Activated CD4-positive, alpha-beta T cell treated with anti-CD3 and anti-CD28 coated beads, Interleukin-2, amount 10 ng/mL, durations not matched to agents 7 days and 5 days (primary cell): ENCODE measurements at regions of chr6 and their contacts with region 1.

Region 1: DNA sequence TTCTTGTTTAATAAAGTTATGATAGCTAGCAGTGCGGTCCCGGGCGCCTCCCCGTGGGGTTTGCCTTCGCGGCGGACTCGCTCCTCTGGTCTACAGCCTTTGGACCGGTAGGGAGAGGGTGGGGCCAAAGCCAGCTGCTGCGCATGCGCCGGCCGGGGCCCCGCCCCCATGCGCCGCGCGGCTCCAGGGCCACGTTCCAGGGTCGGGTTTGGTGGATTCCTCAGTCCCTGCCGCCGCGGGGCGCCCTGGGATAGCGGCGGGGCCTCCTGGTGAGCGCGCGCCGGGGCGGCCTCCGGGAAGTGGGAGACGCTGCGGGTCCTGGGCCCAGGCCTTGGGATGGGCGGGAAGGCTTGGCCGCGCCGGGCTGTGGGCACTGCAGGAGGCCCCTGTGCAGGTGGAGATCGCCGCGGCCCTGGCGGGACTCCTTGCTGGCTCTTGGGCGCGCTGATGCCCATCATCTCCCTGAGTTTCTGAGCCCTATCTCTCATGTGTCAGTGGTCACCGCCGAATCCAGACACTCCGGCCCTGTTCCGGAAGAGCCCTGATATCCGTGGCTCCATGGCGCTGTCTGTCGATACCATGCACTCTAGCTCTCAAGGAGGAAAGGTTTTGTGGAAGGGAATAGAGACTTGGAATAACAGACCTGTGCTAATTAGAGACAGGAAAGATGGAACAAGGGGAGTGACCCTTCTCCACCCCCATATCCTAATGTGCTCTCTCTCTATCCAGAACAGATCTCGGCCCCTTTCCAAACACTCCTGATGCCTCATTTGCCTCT is at the start of gene VARS2:
- DNase-seq: peak; percentile 83
- H3K4me3 Mint-ChIP-seq: peak within 1 kb of the TSS; percentile 83
- H3K27ac Mint-ChIP-seq: peak within 1 kb of the TSS; percentile 90
- H3K4me1 Mint-ChIP-seq: peaks cover 35% of the 10 kb centered on the region
- H3K27me3 Mint-ChIP-seq: no peaks in the 10 kb centered on the region
- total RNA-seq, gene VARS2: 34.3 to 40.2 TPM

Region 2: GRCh38 chr6:29995340-29995777 is 918.9 kb before region 1 on chr6:
- CTCF ChIA-PET with region 1: no interaction called
- POLR2A ChIA-PET with region 1: no interaction called
- DNase-seq: no peak
- H3K4me3 Mint-ChIP-seq: no peak overlapping the region
- H3K27ac Mint-ChIP-seq: no peak overlapping the region
- H3K4me1 Mint-ChIP-seq: peaks cover 3% of the 10 kb centered on the region
- H3K27me3 Mint-ChIP-seq: peaks cover 21% of the 10 kb centered on the region

Region 3: DNA sequence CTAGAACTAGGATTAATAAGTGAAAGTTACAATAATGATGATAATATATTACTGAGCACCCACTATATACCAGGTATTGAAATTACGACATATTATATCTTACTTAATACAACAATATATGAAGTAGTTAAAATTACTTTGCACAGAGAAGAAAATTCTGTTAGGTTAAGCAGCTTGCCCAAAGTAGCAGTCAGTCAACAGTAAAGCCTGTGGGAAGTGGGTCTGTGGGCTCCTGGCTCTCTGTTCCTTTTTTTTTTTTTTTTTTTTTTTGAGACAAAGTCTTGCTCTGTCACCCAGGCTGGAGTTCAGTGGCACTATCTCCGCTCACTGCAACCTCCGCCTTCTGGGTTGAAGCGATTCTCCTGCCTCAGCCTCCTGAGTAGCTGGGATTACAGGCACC is 11.0 kb before region 1 on chr6:
- CTCF ChIA-PET with region 1: interaction called, 14 read pairs
- POLR2A ChIA-PET with region 1: no interaction called
- DNase-seq: no peak
- H3K4me3 Mint-ChIP-seq: no peak overlapping the region
- H3K27ac Mint-ChIP-seq: no peak overlapping the region
- H3K4me1 Mint-ChIP-seq: peaks cover 19% of the 10 kb centered on the region
- H3K27me3 Mint-ChIP-seq: no peaks in the 10 kb centered on the region

Region 4: DNA sequence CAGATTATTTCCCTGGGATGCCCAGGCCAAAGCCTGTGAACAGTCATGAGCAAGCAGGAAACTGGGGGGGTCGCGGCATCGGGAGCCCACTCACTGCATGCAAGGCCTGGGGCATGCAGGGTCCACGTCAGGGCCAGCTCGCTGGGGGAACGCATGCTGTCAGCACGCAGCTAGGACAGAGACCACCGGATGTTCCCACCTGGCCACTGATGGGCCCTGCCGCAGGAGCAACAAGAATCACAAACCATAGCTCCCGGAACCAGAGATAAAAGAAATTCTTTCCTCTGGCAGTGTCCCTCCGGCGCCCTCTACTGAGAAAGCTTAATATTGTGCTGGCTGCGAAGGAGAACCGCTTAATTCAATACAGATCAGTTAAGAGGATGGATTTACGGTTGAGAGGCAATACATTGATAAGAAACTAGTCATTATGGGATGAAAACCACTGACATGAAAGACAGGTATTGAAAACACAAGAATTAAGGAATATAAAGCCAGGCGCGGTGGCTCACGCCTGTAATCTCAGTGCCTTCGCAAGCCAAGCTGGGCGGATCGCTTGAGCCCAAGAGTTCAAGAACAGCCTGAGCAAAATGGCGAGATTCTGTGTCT is 165.5 kb after region 1 on chr6:
- CTCF ChIA-PET with region 1: interaction called, 19 read pairs
- POLR2A ChIA-PET with region 1: no interaction called
- DNase-seq: peak; percentile 83
- H3K4me3 Mint-ChIP-seq: peak overlapping the region; percentile 10
- H3K27ac Mint-ChIP-seq: no peak overlapping the region
- H3K4me1 Mint-ChIP-seq: peaks cover 8% of the 10 kb centered on the region
- H3K27me3 Mint-ChIP-seq: peaks cover 8% of the 10 kb centered on the region

Region 5: DNA sequence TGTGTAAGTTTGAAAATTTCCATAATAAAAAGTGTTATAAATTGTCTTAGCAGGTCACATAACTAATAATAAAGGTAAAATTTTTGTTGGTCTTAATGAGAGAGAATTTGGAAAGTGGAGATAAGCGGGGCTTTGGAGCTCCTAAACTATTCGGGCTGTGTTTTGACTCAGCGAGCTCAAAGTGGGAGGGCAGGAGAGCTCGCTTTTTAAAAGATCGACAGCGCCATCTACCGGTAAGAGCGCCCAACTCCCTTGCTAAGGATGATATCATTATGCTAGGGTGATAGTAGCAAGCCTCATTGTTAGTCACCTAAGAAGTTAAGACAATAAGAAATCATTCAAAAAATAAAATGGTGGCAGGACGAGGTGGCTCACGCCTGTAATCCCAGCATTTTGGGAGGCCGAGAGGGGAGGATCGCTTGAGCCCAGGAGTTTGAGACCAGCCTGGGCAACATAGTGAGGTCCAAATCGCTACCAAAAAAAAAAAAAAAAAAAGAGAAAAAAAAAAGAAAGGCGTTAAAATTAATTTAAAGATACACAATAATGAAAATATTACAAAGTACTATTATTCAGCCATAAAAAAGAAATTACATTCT is 173.3 kb after region 1 on chr6:
- CTCF ChIA-PET with region 1: interaction called, 12 read pairs
- POLR2A ChIA-PET with region 1: no interaction called
- DNase-seq: peak; percentile 90
- H3K4me3 Mint-ChIP-seq: no peak overlapping the region
- H3K27ac Mint-ChIP-seq: peak overlapping the region; percentile 58
- H3K4me1 Mint-ChIP-seq: peaks cover 11% of the 10 kb centered on the region
- H3K27me3 Mint-ChIP-seq: peaks cover 6% of the 10 kb centered on the region